ENCODE measurements at regions of chr7 and their contacts with region 1.

Region 1: GRCh38 chr7:23357190-23358093 is 58.3 kb downstream of the MALSU1 start:
- DNase-seq: peak in 1 of 2 experiments; percentile 62
- H3K4me3 ChIP-seq: no peak overlapping the region
- H3K4me3 Mint-ChIP-seq: peak overlapping the region; percentile 37
- H3K27ac Mint-ChIP-seq: peak overlapping the region; percentile 50
- H3K4me1 ChIP-seq: peaks cover 20% of the 10 kb centered on the region
- H3K4me1 Mint-ChIP-seq: peaks cover 23% of the 10 kb centered on the region
- H3K27me3 ChIP-seq: no peaks in the 10 kb centered on the region
- H3K27me3 Mint-ChIP-seq: no peaks in the 10 kb centered on the region
- CTCF ChIP-seq: peak; percentile 37 to 50

Region 2: GRCh38 chr7:23273141-23273599 is 84.3 kb before region 1 on chr7:
- CTCF ChIA-PET with region 1: interaction called, 21 read pairs
- POLR2A ChIA-PET with region 1: no interaction called
- intact Hi-C with region 1: loop called (anchors 1 kb)
- DNase-seq: peak; percentile 96 to 97
- H3K4me3 ChIP-seq: peak overlapping the region; percentile 15; the same call in 1 of the 2 replicates
- H3K4me3 Mint-ChIP-seq: peak overlapping the region; percentile 68
- H3K27ac Mint-ChIP-seq: peak overlapping the region; percentile 74
- H3K4me1 ChIP-seq: peaks cover 5% of the 10 kb centered on the region
- H3K4me1 Mint-ChIP-seq: peaks cover 9% of the 10 kb centered on the region
- H3K27me3 ChIP-seq: no peaks in the 10 kb centered on the region
- H3K27me3 Mint-ChIP-seq: no peaks in the 10 kb centered on the region
- CTCF ChIP-seq: peak; percentile 93 to 95

Region 3: DNA sequence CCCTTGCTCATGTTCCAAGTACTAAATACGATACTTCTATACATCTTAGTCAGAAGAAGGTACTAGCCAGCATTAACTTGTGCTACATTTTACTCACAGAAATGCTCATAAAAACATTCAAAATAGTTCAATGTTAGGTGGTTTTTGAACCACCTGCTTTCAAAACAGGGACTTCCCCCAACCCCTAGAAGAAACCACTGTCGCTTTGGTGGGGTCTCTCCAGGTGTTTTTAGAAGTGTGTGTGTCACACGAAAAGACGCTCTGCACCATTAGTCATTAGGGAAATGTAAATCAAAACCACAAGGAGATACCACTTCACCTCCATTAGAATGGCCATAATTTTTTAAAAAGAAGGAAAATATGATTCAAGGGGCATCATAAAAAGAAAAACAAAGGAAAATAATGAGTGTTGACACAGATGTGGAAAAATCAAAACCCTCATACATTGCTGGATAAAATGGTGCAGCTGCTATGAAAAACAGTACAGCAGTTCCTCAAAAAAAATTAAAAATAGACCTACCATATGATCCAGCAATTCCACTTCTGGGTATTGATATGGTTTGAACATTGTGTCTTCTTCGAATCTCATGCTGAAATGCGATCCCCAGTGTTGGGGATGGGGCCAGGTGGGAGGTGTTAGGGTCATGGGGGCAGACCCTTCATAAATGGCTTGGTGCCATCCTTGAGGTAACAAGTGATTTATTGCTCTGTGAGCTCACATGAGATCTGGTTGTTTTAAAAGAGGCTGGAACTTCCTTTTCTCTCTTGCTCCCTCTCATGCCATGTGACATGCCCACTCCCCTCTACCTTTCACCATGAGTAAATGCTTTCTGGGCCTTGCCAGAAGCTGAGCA is 15.9 kb after region 1 on chr7:
- CTCF ChIA-PET with region 1: interaction called, 6 read pairs
- POLR2A ChIA-PET with region 1: interaction called, 10 read pairs
- intact Hi-C with region 1: no loop called
- DNase-seq: no peak
- H3K4me3 ChIP-seq: no peak overlapping the region
- H3K4me3 Mint-ChIP-seq: no peak overlapping the region
- H3K27ac Mint-ChIP-seq: peak overlapping the region; percentile 23
- H3K4me1 ChIP-seq: peaks cover 49% of the 10 kb centered on the region
- H3K4me1 Mint-ChIP-seq: peaks cover 48% of the 10 kb centered on the region
- H3K27me3 ChIP-seq: no peaks in the 10 kb centered on the region
- H3K27me3 Mint-ChIP-seq: no peaks in the 10 kb centered on the region
- CTCF ChIP-seq: no peak

Region 4: DNA sequence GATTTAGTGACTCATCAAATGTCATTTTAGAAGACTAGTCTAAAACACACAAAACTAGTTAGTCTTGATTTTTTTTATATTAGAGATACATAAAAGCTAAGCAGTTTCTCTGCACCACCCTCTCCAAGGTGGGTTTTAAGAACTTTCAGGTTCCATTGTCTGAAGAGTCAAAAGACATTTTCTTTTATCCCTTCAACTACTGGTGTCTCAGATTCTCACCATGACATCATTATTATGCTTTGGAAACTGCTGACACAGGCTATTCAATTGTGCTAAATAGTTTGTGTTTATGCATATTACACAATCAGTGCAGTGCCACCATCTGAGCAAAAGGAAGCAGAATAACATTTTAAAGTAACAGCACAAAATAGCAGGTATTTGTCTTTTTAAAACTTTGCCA is 60.6 kb after region 1 on chr7:
- CTCF ChIA-PET with region 1: no interaction called
- POLR2A ChIA-PET with region 1: no interaction called
- intact Hi-C with region 1: loop called (anchors 2 kb)
- DNase-seq: no peak
- H3K4me3 ChIP-seq: no peak overlapping the region
- H3K4me3 Mint-ChIP-seq: no peak overlapping the region
- H3K27ac Mint-ChIP-seq: no peak overlapping the region
- H3K4me1 ChIP-seq: peaks cover 5% of the 10 kb centered on the region
- H3K4me1 Mint-ChIP-seq: peaks cover 11% of the 10 kb centered on the region
- H3K27me3 ChIP-seq: no peaks in the 10 kb centered on the region
- H3K27me3 Mint-ChIP-seq: no peaks in the 10 kb centered on the region
- CTCF ChIP-seq: no peak

Region 5: GRCh38 chr7:23462846-23463245 is 105.4 kb after region 1 on chr7:
- CTCF ChIA-PET with region 1: interaction called, 12 read pairs
- POLR2A ChIA-PET with region 1: interaction called, 10 read pairs
- intact Hi-C with region 1: no loop called
- DNase-seq: peak in 1 of 2 experiments; percentile 35
- H3K4me3 ChIP-seq: no peak overlapping the region
- H3K4me3 Mint-ChIP-seq: peak overlapping the region; percentile 72
- H3K27ac Mint-ChIP-seq: peak overlapping the region; percentile 12
- H3K4me1 ChIP-seq: peaks cover 44% of the 10 kb centered on the region
- H3K4me1 Mint-ChIP-seq: peaks cover 37% of the 10 kb centered on the region
- H3K27me3 ChIP-seq: no peaks in the 10 kb centered on the region
- H3K27me3 Mint-ChIP-seq: no peaks in the 10 kb centered on the region
- CTCF ChIP-seq: no peak

Region 6: DNA sequence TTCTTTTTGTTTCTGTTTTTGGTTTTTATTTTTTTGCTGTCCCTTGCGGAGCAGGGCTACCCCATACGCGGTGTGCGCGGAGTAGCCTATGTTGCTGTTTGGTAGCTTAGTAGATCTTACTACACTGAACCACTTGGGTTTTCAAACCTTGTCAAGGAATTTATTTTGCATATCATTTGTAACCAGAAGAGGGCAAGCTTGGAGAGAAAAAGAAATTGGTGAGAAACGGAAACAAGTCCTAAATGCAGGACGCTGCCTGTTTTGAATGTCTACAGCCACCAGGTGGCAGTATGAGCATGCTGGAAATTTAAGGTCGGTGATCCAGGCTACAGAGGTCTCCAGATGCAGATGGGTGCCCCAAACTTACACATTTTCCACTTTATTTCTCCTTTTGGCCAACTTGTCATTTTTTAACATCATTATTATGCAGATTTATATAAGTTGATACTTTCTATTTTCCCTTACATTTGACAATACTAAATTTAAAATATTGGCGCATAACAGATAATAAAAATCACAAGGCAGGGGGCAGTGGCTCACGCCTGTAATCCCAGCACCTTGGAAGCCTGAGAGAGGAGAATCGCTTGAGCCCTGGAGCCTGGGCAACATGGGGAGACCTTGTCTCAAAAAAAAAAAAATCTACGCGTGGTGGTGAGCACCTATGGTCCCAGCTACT is 189.6 kb after region 1 on chr7:
- CTCF ChIA-PET with region 1: interaction called, 17 read pairs
- POLR2A ChIA-PET with region 1: interaction called, 3 read pairs
- intact Hi-C with region 1: loop called (anchors 1 kb)
- DNase-seq: peak; percentile 86 to 87
- H3K4me3 ChIP-seq: no peak overlapping the region
- H3K4me3 Mint-ChIP-seq: no peak overlapping the region
- H3K27ac Mint-ChIP-seq: no peak overlapping the region
- H3K4me1 ChIP-seq: no peaks in the 10 kb centered on the region
- H3K4me1 Mint-ChIP-seq: peaks cover 12% of the 10 kb centered on the region
- H3K27me3 ChIP-seq: no peaks in the 10 kb centered on the region
- H3K27me3 Mint-ChIP-seq: peaks cover 2% of the 10 kb centered on the region
- CTCF ChIP-seq: peak; percentile 93 to 96

Measured in Caco-2 (cell line).